ENCODE measurements at regions of chr7 and their contacts with region 1.

Region 1: GRCh38 chr7:38222481-38223096 is 44.5 kb downstream of the STARD3NL start:
- DNase-seq: peak in 10 of 42 donors; percentile 19 to 69 (median 45)

Region 2: DNA sequence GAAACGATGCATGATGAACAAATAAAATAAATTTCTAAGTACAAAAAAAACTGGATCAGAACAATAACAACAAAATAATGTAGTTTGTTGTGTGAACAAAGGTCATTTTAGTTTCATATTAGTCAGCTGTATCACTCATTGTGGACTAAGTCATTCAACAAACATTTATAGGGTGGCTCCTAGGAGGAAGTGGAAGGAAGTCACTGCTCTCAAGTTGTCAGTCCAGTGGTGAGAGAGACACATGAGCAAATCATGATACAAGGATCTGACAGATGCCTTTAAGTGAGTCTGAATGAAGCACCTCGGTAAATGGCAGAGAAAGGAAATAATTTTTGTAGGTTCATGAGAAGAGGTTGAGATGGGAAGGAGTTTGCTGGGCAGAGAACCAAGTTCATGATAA is 245.3 kb before region 1 on chr7:
- intact Hi-C with region 1: no loop called
- DNase-seq: no peak

Region 3: DNA sequence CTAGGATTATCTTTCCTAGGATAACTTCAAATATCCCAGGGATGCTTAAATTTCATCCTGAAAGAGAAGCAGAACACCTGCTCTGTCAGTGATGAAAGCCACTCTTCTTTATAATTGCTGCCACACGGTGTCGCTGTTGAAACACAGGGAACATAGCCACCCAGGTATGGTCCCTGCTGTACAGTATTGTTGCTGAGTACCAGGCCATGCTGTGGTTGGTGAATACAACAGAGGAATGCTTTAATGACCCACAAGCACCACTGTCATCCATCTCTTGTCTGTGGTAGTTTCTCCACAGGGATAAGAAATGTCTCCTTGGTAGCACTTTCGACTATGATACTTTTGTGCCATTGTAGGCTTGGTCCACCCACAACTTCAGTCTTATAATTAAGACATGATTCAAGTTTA is 115.1 kb before region 1 on chr7:
- intact Hi-C with region 1: loop called (anchors 5 kb)
- DNase-seq: peak; percentile 26 to 89 (median 70)

Region 4: DNA sequence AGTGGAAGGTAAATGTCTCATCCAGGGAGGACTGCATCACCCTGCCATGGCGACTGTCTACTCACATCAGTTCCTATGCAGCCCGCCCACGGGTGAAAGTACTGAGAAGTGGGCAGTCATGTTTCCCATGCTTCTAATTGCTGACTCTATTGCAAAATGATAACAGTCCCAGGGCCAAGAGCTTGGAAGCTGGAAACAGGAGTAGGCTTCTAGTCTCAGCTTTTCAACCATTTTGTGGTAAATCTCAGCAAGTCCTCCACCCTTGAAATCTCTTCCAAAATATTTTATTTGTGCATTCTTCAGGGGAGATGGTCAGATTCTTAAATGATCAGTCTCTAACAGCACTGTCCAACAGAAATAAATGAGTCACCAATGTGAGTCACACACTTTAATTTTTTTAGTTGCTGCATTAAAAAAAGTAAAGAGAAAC is 98.9 kb after region 1 on chr7:
- intact Hi-C with region 1: loop called (anchors 10 kb)
- DNase-seq: no peak

Region 5: DNA sequence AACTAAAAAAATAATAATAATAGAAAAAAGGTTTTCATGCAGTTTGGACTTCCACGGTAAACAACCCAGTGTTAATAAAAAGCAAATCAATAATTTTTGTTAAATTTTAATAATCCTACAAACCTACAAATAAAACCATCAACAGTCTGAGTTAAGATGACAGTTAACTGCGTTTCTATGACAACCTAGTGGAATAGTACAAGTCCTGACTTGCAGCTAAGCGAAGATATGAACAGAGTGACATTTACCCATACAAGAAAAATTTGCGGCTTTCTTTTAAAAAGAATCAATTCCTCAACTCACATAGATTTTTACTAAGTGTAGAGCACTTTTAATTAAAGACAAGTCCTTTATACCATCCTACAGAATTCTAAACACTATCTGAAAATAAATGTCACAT is 650.8 kb after region 1 on chr7:
- intact Hi-C with region 1: no loop called
- DNase-seq: no peak